ENCODE measurements at regions of chr20 and their contacts with region 1.

Region 1: DNA sequence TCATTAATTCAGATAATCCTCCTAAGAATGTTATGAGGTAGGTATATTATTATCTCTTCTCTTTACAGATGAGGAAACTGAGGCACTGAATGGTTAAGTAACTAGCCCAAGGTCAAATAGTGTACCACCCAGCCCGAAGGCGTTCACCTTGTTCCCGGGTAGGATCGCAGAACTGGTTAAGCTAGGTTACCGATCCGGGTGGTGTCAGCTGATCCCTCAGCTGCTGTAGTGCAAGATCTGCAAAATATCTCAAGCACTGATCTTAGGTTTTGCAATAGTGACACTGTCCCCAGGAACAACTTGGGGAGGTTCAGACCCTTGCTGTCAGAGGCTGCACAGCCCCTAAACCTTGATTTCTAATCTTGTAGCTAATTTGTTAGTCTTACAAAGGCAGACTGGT is 28.2 kb downstream of the SLC52A3 start:
- DNase-seq: no peak
- H3K4me3 Mint-ChIP-seq: no peak overlapping the region
- H3K27ac Mint-ChIP-seq: no peak overlapping the region
- H3K4me1 Mint-ChIP-seq: no peaks in the 10 kb centered on the region
- H3K27me3 Mint-ChIP-seq: peaks cover 13% of the 10 kb centered on the region
- CTCF ChIP-seq: no peak

Region 2: DNA sequence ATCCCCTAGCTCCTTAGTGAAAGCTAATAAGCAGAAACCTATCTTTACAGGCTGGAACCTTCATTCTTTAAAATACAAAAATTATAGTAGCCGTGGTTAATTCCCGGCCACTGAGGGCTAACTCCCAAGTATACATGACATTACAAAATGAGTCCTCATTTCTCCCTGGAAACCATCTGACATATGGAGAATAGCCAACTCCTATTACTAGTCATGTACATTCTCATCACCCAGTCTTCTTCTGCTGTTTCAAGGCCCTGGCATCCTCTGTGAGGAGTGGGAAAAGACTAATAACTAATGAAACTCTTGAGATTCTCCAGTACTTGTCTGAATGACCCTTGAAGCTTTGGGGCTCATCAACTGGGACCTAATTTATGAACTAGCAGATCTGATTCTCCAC is 226.7 kb before region 1 on chr20:
- CTCF ChIA-PET with region 1: interaction called, 17 read pairs
- POLR2A ChIA-PET with region 1: interaction called, 3 read pairs
- intact Hi-C with region 1: no loop called
- DNase-seq: no peak
- H3K4me3 Mint-ChIP-seq: no peak overlapping the region
- H3K27ac Mint-ChIP-seq: no peak overlapping the region
- H3K4me1 Mint-ChIP-seq: peaks cover 30% of the 10 kb centered on the region
- H3K27me3 Mint-ChIP-seq: no peaks in the 10 kb centered on the region
- CTCF ChIP-seq: no peak

Region 3: GRCh38 chr20:555933-556526 is 184.1 kb before region 1 on chr20:
- CTCF ChIA-PET with region 1: interaction called, 169 read pairs
- POLR2A ChIA-PET with region 1: interaction called, 6 read pairs
- intact Hi-C with region 1: loop called (anchors 1 kb)
- DNase-seq: peak; percentile 22
- H3K4me3 Mint-ChIP-seq: no peak overlapping the region
- H3K27ac Mint-ChIP-seq: no peak overlapping the region
- H3K4me1 Mint-ChIP-seq: peaks cover 7% of the 10 kb centered on the region
- H3K27me3 Mint-ChIP-seq: peaks cover 33% of the 10 kb centered on the region
- CTCF ChIP-seq: no peak

Region 4: DNA sequence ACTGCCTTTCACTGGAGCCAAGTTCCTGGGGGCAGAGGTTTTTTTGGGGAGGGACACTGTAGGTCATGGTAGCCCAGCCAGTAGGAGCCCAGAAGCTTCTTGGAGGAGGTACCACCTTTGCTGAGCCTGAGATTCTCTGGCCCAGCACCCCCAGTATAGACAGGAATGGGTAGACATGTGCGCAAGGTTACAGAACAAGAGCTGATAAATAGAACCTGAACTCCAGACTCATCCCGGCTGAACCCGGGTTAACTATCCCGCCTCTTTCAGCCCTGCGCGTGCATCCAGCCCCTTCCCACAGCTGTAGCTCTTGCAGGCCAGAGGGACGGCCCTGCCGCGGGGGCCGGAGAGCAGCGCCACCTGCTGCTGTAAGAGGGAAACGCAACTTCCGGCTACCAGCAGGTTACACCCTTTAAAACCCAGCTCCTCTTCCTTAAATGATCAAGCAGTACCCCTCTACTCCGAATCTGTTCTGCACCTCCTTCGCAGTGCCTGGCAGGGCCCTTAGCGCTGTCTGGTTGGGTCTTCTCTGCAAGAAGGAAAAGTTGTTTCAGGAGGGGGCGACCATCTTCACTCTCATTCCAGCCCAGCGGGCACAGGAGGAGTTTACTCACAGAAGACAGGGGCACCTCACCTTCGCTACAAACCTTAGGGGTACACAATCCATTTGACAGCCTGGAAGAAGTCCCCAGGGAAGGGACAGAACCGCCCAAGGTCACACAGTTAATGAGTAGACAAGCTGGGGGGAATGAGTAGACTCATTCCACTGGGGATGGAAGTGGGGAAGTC is 94.6 kb before region 1 on chr20:
- CTCF ChIA-PET with region 1: interaction called, 37 read pairs
- POLR2A ChIA-PET with region 1: no interaction called
- intact Hi-C with region 1: no loop called
- DNase-seq: peak; percentile 58
- H3K4me3 Mint-ChIP-seq: no peak overlapping the region
- H3K27ac Mint-ChIP-seq: no peak overlapping the region
- H3K4me1 Mint-ChIP-seq: peaks cover 5% of the 10 kb centered on the region
- H3K27me3 Mint-ChIP-seq: no peaks in the 10 kb centered on the region
- CTCF ChIP-seq: peak; percentile 91

Region 5: GRCh38 chr20:728248-728944 is 11.7 kb before region 1 on chr20:
- CTCF ChIA-PET with region 1: interaction called, 12 read pairs
- POLR2A ChIA-PET with region 1: interaction called, 3 read pairs
- intact Hi-C with region 1: no loop called
- DNase-seq: no peak
- H3K4me3 Mint-ChIP-seq: no peak overlapping the region
- H3K27ac Mint-ChIP-seq: no peak overlapping the region
- H3K4me1 Mint-ChIP-seq: no peaks in the 10 kb centered on the region
- H3K27me3 Mint-ChIP-seq: peaks cover 52% of the 10 kb centered on the region
- CTCF ChIP-seq: peak; percentile 37

Region 6: DNA sequence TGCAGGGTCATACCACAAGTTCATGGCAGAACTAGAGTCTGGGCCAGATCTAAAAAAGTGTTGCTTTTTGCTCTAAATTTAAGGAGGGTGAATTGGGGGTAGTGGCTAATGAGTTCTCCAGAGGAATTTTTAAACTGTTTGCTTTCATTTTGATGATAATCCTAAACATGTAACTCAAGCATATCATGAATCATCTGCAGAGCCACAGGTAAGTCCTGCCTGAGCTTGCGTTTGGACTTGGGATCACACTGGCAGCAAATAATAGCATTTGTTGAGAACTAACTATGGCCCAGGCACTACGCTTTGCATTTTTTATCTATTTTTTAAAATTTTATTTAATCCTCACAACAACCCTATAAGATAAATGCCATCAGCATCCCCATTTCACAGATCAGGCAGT is 120.8 kb after region 1 on chr20:
- CTCF ChIA-PET with region 1: no interaction called
- POLR2A ChIA-PET with region 1: no interaction called
- intact Hi-C with region 1: no loop called
- DNase-seq: no peak
- H3K4me3 Mint-ChIP-seq: no peak overlapping the region
- H3K27ac Mint-ChIP-seq: no peak overlapping the region
- H3K4me1 Mint-ChIP-seq: peaks cover 39% of the 10 kb centered on the region
- H3K27me3 Mint-ChIP-seq: no peaks in the 10 kb centered on the region
- CTCF ChIP-seq: no peak

Measured in MCF 10A (cell line).